ENCODE measurements at regions of chr20 and their contacts with region 1.

Region 1: GRCh38 chr20:60765821-60766403 is 486.1 kb upstream of the CDH4 start:
- DNase-seq: no peak
- H3K4me3 ChIP-seq: no peak overlapping the region
- H3K27ac ChIP-seq: no peak overlapping the region
- H3K4me1 ChIP-seq: no peaks in the 10 kb centered on the region
- H3K27me3 ChIP-seq: no peaks in the 10 kb centered on the region
- CTCF ChIP-seq: no peak
- EP300 ChIP-seq: no peak
- POLR2A ChIP-seq: no peak

Region 2: DNA sequence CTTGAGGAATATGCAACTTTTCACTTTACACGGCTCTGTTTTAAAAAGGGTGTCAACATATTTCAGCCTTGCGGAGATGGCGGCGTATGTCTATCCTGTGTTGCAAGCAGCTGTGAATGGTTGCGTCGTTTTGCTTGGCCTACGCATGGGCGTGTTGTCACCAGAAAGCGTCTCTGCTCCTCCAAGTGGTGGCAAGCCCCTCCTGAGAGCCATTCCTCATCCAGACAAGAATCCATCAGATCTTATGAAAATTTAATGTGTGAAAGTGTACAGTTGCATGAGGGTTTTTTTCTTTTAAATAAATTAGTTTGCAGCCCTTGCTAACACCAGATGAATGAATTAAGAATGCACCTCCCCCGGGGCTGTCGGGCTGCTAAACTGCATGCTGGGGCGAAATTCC is 1047.2 kb before region 1 on chr20:
- in situ Hi-C with region 1: no loop called
- intact Hi-C with region 1: loop called (anchors 5 kb)
- DNase-seq: no peak
- H3K4me3 ChIP-seq: no peak overlapping the region
- H3K27ac ChIP-seq: no peak overlapping the region
- H3K4me1 ChIP-seq: no peaks in the 10 kb centered on the region
- H3K27me3 ChIP-seq: peaks cover 5% of the 10 kb centered on the region
- CTCF ChIP-seq: no peak
- EP300 ChIP-seq: no peak
- POLR2A ChIP-seq: no peak